CD4-positive, alpha-beta T cell (primary cell): ENCODE measurements at regions of chr17 and their contacts with region 1.

Region 1: GRCh38 chr17:57478484-57479250 is 222.3 kb downstream of the MSI2 start:
- DNase-seq: no peak
- ATAC-seq: no peak
- H3K4me3 ChIP-seq: no peak overlapping the region
- H3K4me3 Mint-ChIP-seq: no peak overlapping the region
- H3K27ac ChIP-seq: no peak overlapping the region
- H3K27ac Mint-ChIP-seq: no peak overlapping the region
- H3K4me1 ChIP-seq: peaks cover 3% of the 10 kb centered on the region
- H3K4me1 Mint-ChIP-seq: peaks cover 82% of the 10 kb centered on the region
- H3K27me3 ChIP-seq: no peaks in the 10 kb centered on the region
- H3K27me3 Mint-ChIP-seq: no peaks in the 10 kb centered on the region
- CTCF ChIP-seq: no peak

Region 2: DNA sequence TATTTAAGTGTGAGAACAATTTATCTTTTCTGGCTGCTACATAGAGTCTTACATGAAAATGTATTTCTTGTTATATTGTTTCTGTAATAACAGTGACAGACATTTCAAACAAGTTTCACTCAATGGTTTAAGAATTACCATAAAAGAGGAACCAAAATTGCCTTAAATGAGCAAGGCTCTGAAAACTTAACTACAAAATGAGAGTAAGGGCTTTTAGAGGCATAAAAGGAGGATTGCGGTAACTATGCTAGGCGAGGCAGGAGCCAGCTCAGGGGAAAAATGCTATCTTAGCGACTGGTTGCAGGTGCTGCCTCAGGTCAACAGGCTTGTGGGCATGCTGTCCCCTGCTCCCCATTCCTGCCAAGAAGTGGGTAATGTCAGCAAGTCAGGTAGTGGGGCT is 304.1 kb before region 1 on chr17:
- CTCF ChIA-PET with region 1: no interaction called
- POLR2A ChIA-PET with region 1: no interaction called
- intact Hi-C with region 1: no loop called
- DNase-seq: no peak
- ATAC-seq: no peak
- H3K4me3 ChIP-seq: no peak overlapping the region
- H3K4me3 Mint-ChIP-seq: no peak overlapping the region
- H3K27ac ChIP-seq: no peak overlapping the region
- H3K27ac Mint-ChIP-seq: no peak overlapping the region
- H3K4me1 ChIP-seq: no peaks in the 10 kb centered on the region
- H3K4me1 Mint-ChIP-seq: no peaks in the 10 kb centered on the region
- H3K27me3 ChIP-seq: peaks cover 2 to 12% of the 10 kb centered on the region in 2 experiments
- H3K27me3 Mint-ChIP-seq: peaks cover 22% of the 10 kb centered on the region
- CTCF ChIP-seq: no peak

Region 3: GRCh38 chr17:57379895-57380434 is 98.7 kb before region 1 on chr17:
- CTCF ChIA-PET with region 1: no interaction called
- POLR2A ChIA-PET with region 1: no interaction called
- intact Hi-C with region 1: loop called in 1 of 2 experiments (anchors 5 kb)
- DNase-seq: no peak
- ATAC-seq: no peak
- H3K4me3 ChIP-seq: no peak overlapping the region
- H3K4me3 Mint-ChIP-seq: peak overlapping the region; percentile 16
- H3K27ac ChIP-seq: no peak overlapping the region
- H3K27ac Mint-ChIP-seq: peak overlapping the region; percentile 42
- H3K4me1 ChIP-seq: peaks cover 4% of the 10 kb centered on the region
- H3K4me1 Mint-ChIP-seq: peaks cover 30% of the 10 kb centered on the region
- H3K27me3 ChIP-seq: no peaks in the 10 kb centered on the region
- H3K27me3 Mint-ChIP-seq: no peaks in the 10 kb centered on the region
- CTCF ChIP-seq: no peak

Region 4: GRCh38 chr17:57518587-57519581 is 40.2 kb after region 1 on chr17:
- CTCF ChIA-PET with region 1: no interaction called
- POLR2A ChIA-PET with region 1: no interaction called
- intact Hi-C with region 1: no loop called
- DNase-seq: no peak
- ATAC-seq: no peak
- H3K4me3 ChIP-seq: no peak overlapping the region
- H3K4me3 Mint-ChIP-seq: no peak overlapping the region
- H3K27ac ChIP-seq: no peak overlapping the region
- H3K27ac Mint-ChIP-seq: no peak overlapping the region
- H3K4me1 ChIP-seq: no peaks in the 10 kb centered on the region
- H3K4me1 Mint-ChIP-seq: peaks cover 9% of the 10 kb centered on the region
- H3K27me3 ChIP-seq: no peaks in the 10 kb centered on the region
- H3K27me3 Mint-ChIP-seq: no peaks in the 10 kb centered on the region
- CTCF ChIP-seq: no peak

Region 5: GRCh38 chr17:57636985-57637665 is 158.5 kb after region 1 on chr17:
- CTCF ChIA-PET with region 1: no interaction called
- POLR2A ChIA-PET with region 1: no interaction called
- intact Hi-C with region 1: no loop called
- DNase-seq: peak in 1 of 14 experiments; percentile 7
- ATAC-seq: no peak
- H3K4me3 ChIP-seq: no peak overlapping the region
- H3K4me3 Mint-ChIP-seq: no peak overlapping the region
- H3K27ac ChIP-seq: no peak overlapping the region
- H3K27ac Mint-ChIP-seq: no peak overlapping the region
- H3K4me1 ChIP-seq: no peaks in the 10 kb centered on the region
- H3K4me1 Mint-ChIP-seq: no peaks in the 10 kb centered on the region
- H3K27me3 ChIP-seq: no peaks in the 10 kb centered on the region
- H3K27me3 Mint-ChIP-seq: no peaks in the 10 kb centered on the region
- CTCF ChIP-seq: no peak